ENCODE measurements at regions of chr1 and their contacts with region 1.

Region 1: GRCh38 chr1:89133747-89134146 is 7.8 kb upstream of the GBP2 start:
- DNase-seq: no peak
- H3K4me3 Mint-ChIP-seq: no peak overlapping the region
- H3K27ac Mint-ChIP-seq: no peak overlapping the region
- H3K4me1 Mint-ChIP-seq: peaks cover 10% of the 10 kb centered on the region
- H3K27me3 Mint-ChIP-seq: no peaks in the 10 kb centered on the region
- CTCF ChIP-seq: no peak

Region 2: GRCh38 chr1:89190017-89190416 is 56.3 kb after region 1 on chr1:
- CTCF ChIA-PET with region 1: no interaction called
- intact Hi-C with region 1: loop called (anchors 2 kb)
- DNase-seq: no peak
- H3K4me3 Mint-ChIP-seq: no peak overlapping the region
- H3K27ac Mint-ChIP-seq: no peak overlapping the region
- H3K4me1 Mint-ChIP-seq: no peaks in the 10 kb centered on the region
- H3K27me3 Mint-ChIP-seq: no peaks in the 10 kb centered on the region
- CTCF ChIP-seq: no peak

Region 3: GRCh38 chr1:89298461-89298860 is 164.7 kb after region 1 on chr1:
- CTCF ChIA-PET with region 1: no interaction called
- intact Hi-C with region 1: no loop called
- DNase-seq: no peak
- H3K4me3 Mint-ChIP-seq: no peak overlapping the region
- H3K27ac Mint-ChIP-seq: no peak overlapping the region
- H3K4me1 Mint-ChIP-seq: no peaks in the 10 kb centered on the region
- H3K27me3 Mint-ChIP-seq: no peaks in the 10 kb centered on the region
- CTCF ChIP-seq: no peak

Measured in Calu3 (cell line).